B cell (primary cell): ENCODE measurements at regions of chr13 and their contacts with region 1.

Region 1: DNA sequence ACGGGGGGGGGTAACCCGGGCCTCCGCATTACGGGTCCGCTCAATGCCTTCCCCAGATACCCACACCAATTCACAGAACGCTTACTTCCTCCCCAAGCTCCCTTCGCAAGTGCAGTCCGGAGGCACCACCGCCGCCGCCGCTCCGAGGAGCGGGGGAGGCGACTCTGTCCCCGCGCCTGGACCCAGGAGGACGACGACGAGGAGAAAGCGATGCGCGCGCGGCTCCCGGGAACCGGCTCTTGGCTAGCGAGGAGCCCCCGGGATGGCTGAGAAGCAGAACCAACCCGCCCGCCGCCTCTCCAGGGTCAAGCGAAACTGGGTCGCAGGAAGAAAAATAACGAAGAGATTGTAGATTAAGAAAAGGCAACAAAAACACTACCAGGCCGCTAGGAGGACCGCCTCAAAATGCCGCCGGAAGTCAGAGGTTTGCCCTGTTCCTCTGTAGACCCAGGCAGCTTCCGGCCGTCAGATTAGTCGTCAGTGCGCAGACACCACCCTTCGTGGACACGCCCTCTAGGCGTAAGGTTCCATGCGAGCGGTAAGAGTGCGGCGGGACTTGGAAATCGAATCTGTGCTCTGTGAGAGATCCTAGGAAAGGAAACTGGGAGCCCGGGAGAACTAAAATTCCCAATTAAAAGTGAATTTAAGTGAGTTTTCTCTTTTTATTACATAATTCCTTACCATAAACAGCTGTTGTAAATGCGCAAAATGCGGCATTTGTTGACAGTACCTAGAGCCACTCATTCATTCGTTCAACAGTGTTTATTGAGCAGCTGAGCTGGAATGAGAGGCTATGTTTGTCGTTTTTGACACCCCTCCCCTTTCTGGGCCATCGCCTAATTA is at the start of gene ZC3H13:
- DNase-seq: peak; percentile 95
- ATAC-seq: peak; percentile 99
- H3K4me3 ChIP-seq: peak within 1 kb of the TSS; percentile 84 to 95 (median 88)
- H3K4me3 Mint-ChIP-seq: peak within 1 kb of the TSS; percentile 96
- H3K27ac ChIP-seq: peak within 1 kb of the TSS; percentile 89 to 96
- H3K27ac Mint-ChIP-seq: peak within 1 kb of the TSS; percentile 95
- H3K4me1 ChIP-seq: peaks cover 19 to 26% of the 10 kb centered on the region in 2 donors
- H3K4me1 Mint-ChIP-seq: peaks cover 33% of the 10 kb centered on the region
- H3K27me3 ChIP-seq: peaks cover 0 to 3% (median 0%) of the 10 kb centered on the region in 4 experiments
- H3K27me3 Mint-ChIP-seq: peaks cover 6% of the 10 kb centered on the region
- CTCF ChIP-seq: peak; percentile 65
- total RNA-seq, gene ZC3H13: 61.9 and 65.7 TPM in 2 replicates

Region 2: GRCh38 chr13:45464687-45465453 is 587.7 kb before region 1 on chr13 and contains the start of gene COG3:
- CTCF ChIA-PET with region 1: no interaction called
- POLR2A ChIA-PET with region 1: no interaction called
- intact Hi-C with region 1: loop called (anchors 10 kb)
- DNase-seq: peak; percentile 96
- ATAC-seq: peak; percentile 96
- H3K4me3 ChIP-seq: peak within 1 kb of the TSS; percentile 74 to 96 (median 88)
- H3K4me3 Mint-ChIP-seq: peak within 1 kb of the TSS; percentile 91
- H3K27ac ChIP-seq: peak within 1 kb of the TSS; percentile 78 to 83
- H3K27ac Mint-ChIP-seq: peak within 1 kb of the TSS; percentile 91
- H3K4me1 ChIP-seq: peaks cover 12 to 21% of the 10 kb centered on the region in 2 donors
- H3K4me1 Mint-ChIP-seq: peaks cover 38% of the 10 kb centered on the region
- H3K27me3 ChIP-seq: no peaks in the 10 kb centered on the region
- H3K27me3 Mint-ChIP-seq: no peaks in the 10 kb centered on the region
- CTCF ChIP-seq: peak; percentile 56
- total RNA-seq, gene COG3: 37.3 and 41.5 TPM in 2 replicates

Region 3: GRCh38 chr13:46071590-46072249 is 19.2 kb after region 1 on chr13:
- CTCF ChIA-PET with region 1: no interaction called
- POLR2A ChIA-PET with region 1: no interaction called
- intact Hi-C with region 1: no loop called
- DNase-seq: no peak
- ATAC-seq: no peak
- H3K4me3 ChIP-seq: no peak overlapping the region
- H3K4me3 Mint-ChIP-seq: no peak overlapping the region
- H3K27ac ChIP-seq: no peak overlapping the region
- H3K27ac Mint-ChIP-seq: no peak overlapping the region
- H3K4me1 ChIP-seq: no peaks in the 10 kb centered on the region
- H3K4me1 Mint-ChIP-seq: peaks cover 1% of the 10 kb centered on the region
- H3K27me3 ChIP-seq: no peaks in the 10 kb centered on the region
- H3K27me3 Mint-ChIP-seq: no peaks in the 10 kb centered on the region
- CTCF ChIP-seq: no peak

Region 4: GRCh38 chr13:46126552-46127357 is 74.2 kb after region 1 on chr13:
- CTCF ChIA-PET with region 1: interaction called, 3 read pairs
- POLR2A ChIA-PET with region 1: no interaction called
- intact Hi-C with region 1: loop called (anchors 5 kb)
- DNase-seq: peak; percentile 74
- ATAC-seq: peak; percentile 92
- H3K4me3 ChIP-seq: no peak overlapping the region
- H3K4me3 Mint-ChIP-seq: no peak overlapping the region
- H3K27ac ChIP-seq: peak overlapping the region in 1 of 2 donors; percentile 78
- H3K27ac Mint-ChIP-seq: peak overlapping the region; percentile 88
- H3K4me1 ChIP-seq: peaks cover 13 to 16% of the 10 kb centered on the region in 2 donors
- H3K4me1 Mint-ChIP-seq: peaks cover 30% of the 10 kb centered on the region
- H3K27me3 ChIP-seq: no peaks in the 10 kb centered on the region
- H3K27me3 Mint-ChIP-seq: no peaks in the 10 kb centered on the region
- CTCF ChIP-seq: peak; percentile 80

Region 5: GRCh38 chr13:46211483-46212351 is 159.2 kb after region 1 on chr13 and contains the start of gene LRRC63:
- CTCF ChIA-PET with region 1: no interaction called
- POLR2A ChIA-PET with region 1: no interaction called
- intact Hi-C with region 1: loop called (anchors 1 kb)
- DNase-seq: peak; percentile 76
- ATAC-seq: peak; percentile 99
- H3K4me3 ChIP-seq: peak within 1 kb of the TSS; percentile 47 to 85 (median 63)
- H3K4me3 Mint-ChIP-seq: peak within 1 kb of the TSS; percentile 87
- H3K27ac ChIP-seq: no peak within 1 kb of the TSS
- H3K27ac Mint-ChIP-seq: peak within 1 kb of the TSS; percentile 59
- H3K4me1 ChIP-seq: peaks cover 10 to 11% of the 10 kb centered on the region in 2 donors
- H3K4me1 Mint-ChIP-seq: peaks cover 16% of the 10 kb centered on the region
- H3K27me3 ChIP-seq: no peaks in the 10 kb centered on the region
- H3K27me3 Mint-ChIP-seq: peaks cover 2% of the 10 kb centered on the region
- CTCF ChIP-seq: no peak
- total RNA-seq, gene LRRC63: 0.25 TPM in 1 of 2 replicates, not detected in the other

Region 6: GRCh38 chr13:46382224-46382623 is 329.7 kb after region 1 on chr13:
- CTCF ChIA-PET with region 1: no interaction called
- POLR2A ChIA-PET with region 1: no interaction called
- intact Hi-C with region 1: loop called (anchors 5 kb)
- DNase-seq: peak; percentile 77
- ATAC-seq: peak; percentile 46
- H3K4me3 ChIP-seq: peak overlapping the region; percentile 14 to 90 (median 74)
- H3K4me3 Mint-ChIP-seq: peak overlapping the region; percentile 73
- H3K27ac ChIP-seq: peak overlapping the region; percentile 84 to 97
- H3K27ac Mint-ChIP-seq: peak overlapping the region; percentile 90
- H3K4me1 ChIP-seq: peaks cover 66 to 72% of the 10 kb centered on the region in 2 donors
- H3K4me1 Mint-ChIP-seq: peaks cover 60% of the 10 kb centered on the region
- H3K27me3 ChIP-seq: no peaks in the 10 kb centered on the region
- H3K27me3 Mint-ChIP-seq: no peaks in the 10 kb centered on the region
- CTCF ChIP-seq: no peak

Region 7: GRCh38 chr13:46796515-46797474 is 744.3 kb after region 1 on chr13 and contains the start of gene ESD:
- CTCF ChIA-PET with region 1: no interaction called
- POLR2A ChIA-PET with region 1: no interaction called
- intact Hi-C with region 1: loop called (anchors 2 kb)
- DNase-seq: peak; percentile 89
- ATAC-seq: peak; percentile 93
- H3K4me3 ChIP-seq: peak within 1 kb of the TSS; percentile 56 to 99 (median 77)
- H3K4me3 Mint-ChIP-seq: peak within 1 kb of the TSS; percentile 90
- H3K27ac ChIP-seq: peak within 1 kb of the TSS; percentile 78 to 89
- H3K27ac Mint-ChIP-seq: peak within 1 kb of the TSS; percentile 93
- H3K4me1 ChIP-seq: peaks cover 16 to 18% of the 10 kb centered on the region in 2 donors
- H3K4me1 Mint-ChIP-seq: peaks cover 30% of the 10 kb centered on the region
- H3K27me3 ChIP-seq: no peaks in the 10 kb centered on the region
- H3K27me3 Mint-ChIP-seq: no peaks in the 10 kb centered on the region
- CTCF ChIP-seq: no peak
- total RNA-seq, gene ESD: 52.9 and 53.4 TPM in 2 replicates

Region 8: GRCh38 chr13:48000778-48001628 is 1948.5 kb after region 1 on chr13 and contains the start of gene SUCLA2:
- CTCF ChIA-PET with region 1: no interaction called
- POLR2A ChIA-PET with region 1: no interaction called
- intact Hi-C with region 1: loop called (anchors 10 kb)
- DNase-seq: peak; percentile 90
- ATAC-seq: peak; percentile 100
- H3K4me3 ChIP-seq: peak within 1 kb of the TSS; percentile 72 to 89 (median 79)
- H3K4me3 Mint-ChIP-seq: peak within 1 kb of the TSS; percentile 95
- H3K27ac ChIP-seq: peak within 1 kb of the TSS; percentile 43 to 82
- H3K27ac Mint-ChIP-seq: peak within 1 kb of the TSS; percentile 72
- H3K4me1 ChIP-seq: peaks cover 13% of the 10 kb centered on the region in 2 donors
- H3K4me1 Mint-ChIP-seq: peaks cover 30% of the 10 kb centered on the region
- H3K27me3 ChIP-seq: no peaks in the 10 kb centered on the region
- H3K27me3 Mint-ChIP-seq: no peaks in the 10 kb centered on the region
- CTCF ChIP-seq: no peak
- total RNA-seq, gene SUCLA2: 33.7 and 33.9 TPM in 2 replicates